Right cardiac atrium (tissue), 5 donors: ENCODE measurements at regions of chr3 and their contacts with region 1.

Region 1: DNA sequence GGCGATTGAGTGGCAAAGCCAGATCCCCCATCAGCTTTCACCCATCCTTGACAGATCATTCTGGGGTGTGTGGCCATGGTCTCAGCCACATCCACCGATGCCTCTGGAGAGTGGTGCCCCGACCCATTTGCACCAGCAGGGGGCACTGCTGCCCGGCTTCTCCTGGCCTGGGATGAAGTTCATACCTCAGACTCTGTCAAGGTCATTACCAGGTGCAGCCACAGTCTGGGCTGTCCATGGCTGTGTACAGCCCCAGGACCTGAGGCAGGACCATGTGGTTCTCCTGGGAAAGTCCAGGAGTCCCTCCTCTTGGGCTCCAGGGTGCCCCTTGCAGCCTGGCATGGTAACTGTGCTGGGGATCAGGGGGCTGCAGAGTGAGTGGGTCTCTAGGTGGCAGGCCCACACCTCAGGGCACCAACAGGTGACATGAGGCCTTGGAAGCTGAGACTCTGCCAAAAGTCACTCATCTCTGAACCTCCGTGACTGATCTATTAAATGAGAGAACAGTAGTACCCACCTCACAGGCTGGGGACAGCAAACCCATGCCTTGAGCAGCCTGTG is 67.2 kb downstream of the CACNA2D2 start:
- DNase-seq: peak; percentile 54 to 90 (median 88)
- ATAC-seq: peak; percentile 72 to 79
- H3K4me3 ChIP-seq: no peak overlapping the region
- H3K27ac ChIP-seq: peak overlapping the region; percentile 77
- H3K4me1 ChIP-seq: peaks cover 2% of the 10 kb centered on the region
- H3K27me3 ChIP-seq: no peaks in the 10 kb centered on the region

Region 2: GRCh38 chr3:50503504-50504342 is 67.5 kb after region 1 on chr3 and contains the start of gene CACNA2D2:
- intact Hi-C with region 1: loop called in 1 of 4 experiments (anchors 10 kb)
- DNase-seq: peak; percentile 74 to 91 (median 90)
- ATAC-seq: peak; percentile 88
- H3K4me3 ChIP-seq: peak within 1 kb of the TSS; percentile 65
- H3K27ac ChIP-seq: peak within 1 kb of the TSS; percentile 37
- H3K4me1 ChIP-seq: no peaks in the 10 kb centered on the region
- H3K27me3 ChIP-seq: no peaks in the 10 kb centered on the region
- total RNA-seq, gene CACNA2D2: 8.7 to 56.1 (median 40.9) TPM

Region 3: DNA sequence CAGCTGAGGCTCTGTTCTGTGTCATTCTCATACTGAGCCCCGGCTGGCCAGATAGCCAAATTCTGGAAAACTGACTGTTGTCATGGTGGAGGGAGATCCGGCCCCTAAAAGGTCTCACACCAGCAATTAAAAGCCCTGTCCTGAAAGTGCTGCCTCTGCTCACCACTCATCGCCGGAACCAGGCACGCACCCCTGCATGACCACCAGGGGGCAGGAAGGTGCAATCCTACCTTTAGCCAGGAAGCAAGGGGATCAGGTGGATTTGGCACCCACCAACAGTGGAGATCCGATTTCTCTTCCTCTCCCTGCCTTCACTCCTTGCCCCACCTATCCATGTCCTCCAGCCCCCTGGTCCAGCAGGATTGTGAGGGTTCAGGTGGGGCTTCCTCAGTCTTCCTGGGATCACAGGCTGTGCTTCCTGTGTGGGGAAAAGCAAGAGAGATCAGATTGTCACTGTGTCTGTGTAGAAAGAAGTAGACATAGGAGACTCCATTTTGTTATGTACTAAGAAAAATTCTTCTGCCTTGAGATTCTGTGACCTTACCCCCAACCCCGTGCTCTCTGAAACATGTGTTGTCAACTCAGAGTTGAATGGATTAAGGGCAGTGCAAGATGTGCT is 83.4 kb after region 1 on chr3:
- intact Hi-C with region 1: loop called in 2 of 4 experiments (anchors 10 kb)
- DNase-seq: peak; percentile 48 to 78 (median 77)
- ATAC-seq: no peak
- H3K4me3 ChIP-seq: no peak overlapping the region
- H3K27ac ChIP-seq: no peak overlapping the region
- H3K4me1 ChIP-seq: peaks cover 2% of the 10 kb centered on the region
- H3K27me3 ChIP-seq: no peaks in the 10 kb centered on the region

Region 4: GRCh38 chr3:50542177-50543034 is 106.2 kb after region 1 on chr3:
- intact Hi-C with region 1: loop called (anchors 2 to 5 kb)
- DNase-seq: peak; percentile 54 to 84 (median 79)
- ATAC-seq: peak; percentile 61 to 73
- H3K4me3 ChIP-seq: no peak overlapping the region
- H3K27ac ChIP-seq: no peak overlapping the region
- H3K4me1 ChIP-seq: no peaks in the 10 kb centered on the region
- H3K27me3 ChIP-seq: no peaks in the 10 kb centered on the region